ENCODE measurements at regions of chr17 and their contacts with region 1.

Region 1: DNA sequence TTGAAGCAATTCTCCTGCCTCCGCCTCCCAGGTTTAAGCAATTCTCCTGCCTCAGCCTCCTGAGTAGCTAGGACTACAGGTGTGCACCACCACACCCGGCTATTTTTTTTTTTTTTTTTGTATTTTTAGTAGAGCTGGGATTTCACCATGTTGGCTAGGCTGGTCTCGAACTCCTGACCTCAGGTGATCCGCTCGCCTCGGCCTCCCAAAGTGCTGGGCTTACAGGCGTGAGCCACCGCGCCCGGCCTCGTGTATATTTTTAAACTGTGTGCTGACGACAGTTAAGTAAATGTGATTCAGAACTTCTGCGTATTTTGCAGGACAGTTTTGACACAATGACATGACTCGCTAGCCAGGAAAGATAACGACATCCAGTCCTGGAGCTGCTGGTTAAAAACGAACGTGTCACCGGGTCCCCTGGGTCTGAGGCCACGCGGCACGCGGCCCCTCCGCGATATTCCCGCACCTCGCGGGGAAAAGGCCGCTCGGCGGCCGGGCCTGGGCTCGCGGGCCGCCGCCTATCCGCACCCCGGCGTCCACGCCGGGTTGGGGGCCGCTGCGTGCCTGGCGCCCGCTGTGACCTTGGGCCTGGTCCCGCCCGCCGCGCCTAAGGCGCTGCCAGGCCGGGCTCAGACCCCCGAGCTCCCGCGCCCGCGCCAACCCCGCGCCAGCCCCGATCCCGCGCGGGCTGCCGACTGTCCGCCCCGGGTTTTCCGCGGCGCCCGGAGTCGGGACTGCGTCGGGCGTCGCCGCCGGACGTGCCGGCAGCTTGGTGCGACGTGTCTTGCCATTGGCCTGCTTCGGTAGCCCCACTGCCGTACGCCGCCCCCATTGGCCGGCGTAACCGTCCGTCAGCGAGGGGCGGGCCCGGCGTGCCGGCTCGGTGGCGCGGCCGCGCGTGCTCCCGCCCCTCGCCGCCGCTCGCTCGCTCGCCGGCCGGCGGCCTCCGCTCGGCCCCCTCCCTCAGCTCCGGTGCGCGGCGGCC is at the start of gene FOXK2:
- DNase-seq: peak; percentile 95
- ATAC-seq: peak; percentile 99
- total RNA-seq, gene FOXK2: 39.4 TPM

Region 2: GRCh38 chr17:82494236-82495055 is 24.7 kb before region 1 on chr17:
- intact Hi-C with region 1: loop called (anchors 1 kb)
- DNase-seq: peak; percentile 89
- ATAC-seq: peak; percentile 81

Measured in Right ventricle myocardium inferior (tissue), 1 donor.